AG04449 (cell line): ENCODE measurements at regions of chr2 and their contacts with region 1.

Region 1: DNA sequence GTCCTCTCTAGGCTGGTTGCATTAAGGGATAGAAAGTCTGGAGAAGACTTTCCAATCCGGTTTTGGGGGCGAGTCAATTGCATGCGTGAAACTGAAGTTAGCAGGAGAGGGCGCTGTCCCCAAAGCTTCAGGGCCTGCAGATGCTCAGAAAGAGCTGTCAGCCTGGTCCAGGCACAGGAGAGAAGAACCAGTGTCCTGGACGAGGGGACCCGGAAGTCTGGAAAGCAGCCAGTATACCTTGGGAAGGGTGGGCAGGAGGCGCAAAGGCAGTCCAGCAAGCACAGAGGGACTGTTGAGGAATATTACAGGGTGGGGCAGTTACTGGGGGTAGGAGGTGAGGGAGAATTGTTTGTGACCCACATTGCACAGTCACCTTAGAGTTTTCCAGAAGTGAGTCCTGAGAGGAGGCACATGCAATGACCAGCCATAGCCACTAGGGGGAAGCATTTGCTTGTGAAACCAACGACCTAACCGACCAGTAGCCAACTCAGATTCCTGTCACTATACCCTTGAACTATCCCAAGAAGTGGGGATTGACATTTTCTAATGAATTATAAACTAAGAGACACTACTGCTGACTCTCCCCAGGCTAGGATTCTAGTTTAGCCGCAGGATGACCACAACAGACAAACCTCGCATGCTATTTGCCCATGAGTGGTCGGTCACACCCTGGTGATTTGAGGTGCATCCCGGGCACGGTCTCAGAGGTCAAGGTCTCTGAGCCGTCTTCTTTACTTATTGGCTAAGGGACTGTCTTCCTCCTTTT is 172.8 kb downstream of the RDH14 start:
- DNase-seq: no peak
- H3K4me3 ChIP-seq: no peak overlapping the region
- CTCF ChIP-seq: peak; percentile 91

Region 2: GRCh38 chr2:18404708-18405107 is 17.1 kb after region 1 on chr2:
- CTCF ChIA-PET with region 1: interaction called, 24 read pairs
- POLR2A ChIA-PET with region 1: no interaction called
- DNase-seq: no peak
- H3K4me3 ChIP-seq: no peak overlapping the region
- CTCF ChIP-seq: peak; percentile 19